ENCODE measurements at regions of chr10 and their contacts with region 1.

Region 1: GRCh38 chr10:49407552-49408137 is 11.8 kb upstream of the DRGX start:
- DNase-seq: peak; percentile 89
- ATAC-seq: peak; percentile 84

Region 2: DNA sequence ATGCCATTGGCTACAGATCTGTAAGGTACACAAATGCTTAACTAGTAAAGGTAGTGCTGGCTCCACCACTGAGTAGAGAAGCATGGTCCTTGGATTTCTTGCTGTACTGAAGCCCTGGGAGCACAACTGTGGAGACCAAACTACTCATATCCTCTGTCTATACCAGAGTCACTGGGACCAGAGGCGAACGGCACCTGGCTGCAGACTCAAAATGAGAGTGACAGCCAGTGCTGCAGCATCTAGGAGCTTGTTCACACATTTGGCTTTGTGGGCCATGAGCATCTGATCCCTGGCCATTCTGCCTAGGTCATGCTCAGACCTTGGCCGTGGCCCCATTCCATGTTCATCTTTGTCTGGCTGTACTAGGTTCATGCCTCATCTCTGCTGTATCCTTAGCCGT is 499.9 kb before region 1 on chr10:
- intact Hi-C with region 1: no loop called
- DNase-seq: no peak
- ATAC-seq: no peak

Region 3: GRCh38 chr10:48981310-48981907 is 426.2 kb before region 1 on chr10:
- intact Hi-C with region 1: loop called (anchors 10 kb)
- DNase-seq: peak; percentile 76
- ATAC-seq: peak; percentile 94

Region 4: DNA sequence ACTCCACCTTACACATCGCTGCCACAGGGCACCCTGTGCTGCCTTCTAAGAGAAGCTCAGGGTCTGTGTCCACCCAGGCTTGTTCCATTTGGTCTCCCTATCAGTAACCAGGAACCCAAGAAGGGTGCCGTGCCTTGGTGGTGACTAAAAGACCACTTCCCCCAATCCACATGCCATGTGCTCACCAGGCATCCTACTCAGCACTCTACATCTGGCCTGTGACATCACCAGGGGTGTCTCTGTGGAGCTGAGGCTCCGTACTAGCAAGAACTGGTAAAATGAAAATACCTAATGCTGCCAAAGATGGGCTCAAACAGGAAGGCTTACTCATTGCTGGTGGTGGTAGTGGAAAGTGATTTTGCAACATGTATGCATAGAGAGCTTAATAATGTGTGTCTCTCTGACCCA is 127.6 kb before region 1 on chr10:
- intact Hi-C with region 1: no loop called
- DNase-seq: no peak
- ATAC-seq: no peak

Region 5: GRCh38 chr10:49512121-49512809 is 104.6 kb after region 1 on chr10:
- intact Hi-C with region 1: loop called (anchors 5 kb)
- DNase-seq: no peak
- ATAC-seq: peak; percentile 58